Left cardiac atrium (tissue), 4 donors: ENCODE measurements at regions of chrX and their contacts with region 1.

Region 1: GRCh38 chrX:9995855-9996339 is 28.7 kb downstream of the CLDN34 start:
- DNase-seq: peak; percentile 86
- ATAC-seq: peak; percentile 92 to 94

Region 2: GRCh38 chrX:9885150-9885549 is 110.7 kb before region 1 on chrX:
- intact Hi-C with region 1: loop called in 1 of 2 experiments (anchors 5 kb)
- DNase-seq: peak; percentile 58
- ATAC-seq: peak; percentile 61 to 68

Region 3: DNA sequence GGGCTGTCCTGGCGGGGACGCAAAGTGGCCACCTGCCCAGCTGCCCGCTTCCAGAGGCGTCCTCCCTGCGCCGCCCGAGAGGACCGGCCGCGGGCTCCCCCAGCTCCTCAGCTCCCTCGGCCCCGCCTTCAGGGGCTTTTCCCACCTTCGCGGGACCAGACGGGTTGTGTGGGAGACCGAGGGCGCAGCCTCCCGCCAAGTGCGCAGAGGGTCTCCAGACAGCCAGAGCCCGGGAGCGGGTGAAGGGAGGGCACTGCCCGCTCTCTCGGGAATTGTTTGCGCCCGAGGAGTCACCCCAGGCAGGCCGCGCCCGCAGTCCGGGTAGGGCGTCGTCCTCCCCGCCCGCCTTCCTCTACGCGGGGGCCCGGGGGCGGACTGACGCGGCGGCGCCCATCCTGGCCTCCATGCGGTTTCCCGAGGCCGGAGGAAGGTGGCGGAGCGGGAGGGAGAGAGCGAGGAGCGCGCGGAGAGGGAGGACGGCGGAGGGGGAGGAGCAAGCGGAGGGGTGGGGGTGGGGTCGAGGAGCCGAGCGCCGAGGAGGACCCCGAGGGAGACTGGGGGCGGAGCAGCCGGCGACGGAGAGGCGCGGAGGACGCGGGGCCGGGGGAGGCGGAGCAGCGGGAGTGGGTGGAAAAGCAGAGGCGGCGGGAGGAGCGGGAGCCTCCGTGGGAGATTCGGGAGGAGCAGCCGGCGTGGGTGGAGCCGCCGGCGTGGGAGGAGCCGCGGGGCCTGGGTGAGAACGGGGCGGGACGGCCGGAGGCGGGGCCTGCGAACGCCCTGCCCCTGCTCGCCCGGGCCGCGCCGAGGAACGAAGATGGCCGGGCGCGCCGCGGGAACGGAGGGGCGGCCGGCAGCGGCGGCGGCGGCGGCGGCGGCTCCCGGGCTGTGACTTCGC is 18.8 kb after region 1 on chrX:
- intact Hi-C with region 1: no loop called
- DNase-seq: peak; percentile 92
- ATAC-seq: peak; percentile 94 to 96